Astrocyte of the cerebellum (primary cell): ENCODE measurements at regions of chr12 and their contacts with region 1.

Region 1: DNA sequence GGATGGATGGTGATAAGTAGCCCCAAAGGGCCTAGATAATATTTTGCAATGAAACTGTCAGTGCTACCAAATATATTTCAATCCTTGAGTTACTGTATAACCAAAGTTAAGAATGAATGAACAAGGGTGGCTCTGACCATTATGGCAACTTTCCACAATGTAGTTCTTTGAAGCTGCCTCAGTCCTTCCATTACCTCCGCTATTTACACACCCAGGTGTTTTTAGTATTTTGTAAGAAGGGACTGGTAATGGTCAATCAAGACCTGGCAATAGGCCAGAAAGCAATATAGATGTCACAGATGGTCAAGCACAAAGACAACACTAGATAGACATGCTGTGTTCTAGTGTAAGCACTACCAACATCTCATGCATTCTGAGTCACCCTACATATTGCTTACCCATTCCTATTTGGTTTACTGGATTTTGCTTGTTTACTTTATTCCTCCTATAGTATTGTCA is 16.3 kb downstream of the DUSP16 start:
- DNase-seq: no peak
- H3K4me3 ChIP-seq: no peak overlapping the region
- CTCF ChIP-seq: no peak

Region 2: GRCh38 chr12:12606781-12607589 is 60.6 kb after region 1 on chr12:
- in situ Hi-C with region 1: loop called (anchors 10 kb)
- DNase-seq: peak; percentile 87
- H3K4me3 ChIP-seq: no peak overlapping the region
- CTCF ChIP-seq: no peak